Dorsolateral prefrontal cortex (tissue), 120 donors: ENCODE measurements at regions of chr11 and their contacts with region 1.

Region 1: GRCh38 chr11:118928108-118928870 is 2.6 kb upstream of the BCL9L start:
- DNase-seq: peak; percentile 84 to 96 (median 92)
- H3K4me3 ChIP-seq: peak overlapping the region; percentile 65 to 100 (median 82)
- H3K27ac ChIP-seq: peak overlapping the region; percentile 83 to 100 (median 98)
- H3K27me3 ChIP-seq: no peaks in the 10 kb centered on the region
- CTCF ChIP-seq: peak; percentile 84 to 98 (median 94)

Region 2: DNA sequence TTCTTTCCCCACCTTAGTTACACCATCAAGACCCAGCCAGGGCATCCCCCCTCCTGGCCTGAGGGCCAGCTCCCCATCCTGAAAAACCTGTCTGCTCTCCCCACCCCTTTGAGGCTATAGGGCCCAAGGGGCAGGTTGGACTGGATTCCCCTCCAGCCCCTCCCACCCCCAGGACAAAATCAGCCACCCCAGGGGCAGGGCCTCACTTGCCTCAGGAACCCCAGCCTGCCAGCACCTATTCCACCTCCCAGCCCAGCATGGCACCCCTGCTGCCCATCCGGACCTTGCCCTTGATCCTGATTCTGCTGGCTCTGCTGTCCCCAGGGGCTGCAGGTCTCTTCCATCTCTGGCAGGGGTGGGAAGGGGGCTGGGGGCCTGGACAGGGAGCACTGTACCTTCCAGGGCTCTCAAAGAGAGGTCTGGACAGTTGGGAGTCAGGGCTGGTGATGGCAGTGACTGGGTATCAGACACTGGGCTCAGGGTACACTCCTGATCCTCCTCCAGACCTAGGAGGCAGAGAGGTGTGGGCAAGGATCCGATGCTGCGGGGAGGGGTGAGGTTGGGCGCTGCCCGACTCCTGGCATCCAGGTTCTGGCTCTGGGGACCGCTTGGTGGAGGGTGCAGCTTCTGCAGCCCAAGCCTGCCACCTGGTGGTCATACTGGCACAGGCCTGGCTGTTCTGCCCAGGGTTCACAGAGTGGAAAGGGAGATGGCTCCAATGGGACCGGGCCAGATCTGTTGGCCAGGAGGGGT is 28.0 kb after region 1 on chr11 and contains the start of gene UPK2:
- intact Hi-C with region 1: loop called in 1 of 2 experiments (anchors 2 kb)
- DNase-seq: peak; percentile 85 to 94 (median 92)
- H3K4me3 ChIP-seq: peak within 1 kb of the TSS in 1 of 59 donors; percentile 8
- H3K27ac ChIP-seq: peak within 1 kb of the TSS in 1 of 59 donors; percentile 27
- H3K27me3 ChIP-seq: peaks cover 0 to 2% (median 0%) of the 10 kb centered on the region in 45 donors
- CTCF ChIP-seq: peak; percentile 86 to 99 (median 98)
- total RNA-seq, gene UPK2: 0.43 to 1.2 (median 0.59) TPM in 27 of 120 experiments, not detected in the others

Region 3: GRCh38 chr11:119084663-119085436 is 156.6 kb after region 1 on chr11 and contains the start of gene HMBS:
- intact Hi-C with region 1: no loop called
- DNase-seq: peak; percentile 93 to 97 (median 96)
- H3K4me3 ChIP-seq: peak within 1 kb of the TSS; percentile 61 to 99 (median 85)
- H3K27ac ChIP-seq: peak within 1 kb of the TSS; percentile 76 to 100 (median 96)
- H3K27me3 ChIP-seq: no peaks in the 10 kb centered on the region
- CTCF ChIP-seq: peak in 15 of 56 donors; percentile 5 to 36 (median 13)
- total RNA-seq, gene HMBS: 6.8 to 18.6 (median 12.6) TPM